Thyroid gland (tissue), 4 donors: ENCODE measurements at regions of chr3 and their contacts with region 1.

Region 1: GRCh38 chr3:63193629-63194028 is 84.5 kb upstream of the SYNPR start:
- DNase-seq: peak in 1 of 2 donors; percentile 3
- H3K4me3 ChIP-seq: no peak overlapping the region
- H3K27ac ChIP-seq: no peak overlapping the region
- H3K4me1 ChIP-seq: no peaks in the 10 kb centered on the region
- H3K27me3 ChIP-seq: no peaks in the 10 kb centered on the region
- CTCF ChIP-seq: peak in 5 of 6 experiments; percentile 21 to 80 (median 60)
- POLR2A ChIP-seq: no peak

Region 2: DNA sequence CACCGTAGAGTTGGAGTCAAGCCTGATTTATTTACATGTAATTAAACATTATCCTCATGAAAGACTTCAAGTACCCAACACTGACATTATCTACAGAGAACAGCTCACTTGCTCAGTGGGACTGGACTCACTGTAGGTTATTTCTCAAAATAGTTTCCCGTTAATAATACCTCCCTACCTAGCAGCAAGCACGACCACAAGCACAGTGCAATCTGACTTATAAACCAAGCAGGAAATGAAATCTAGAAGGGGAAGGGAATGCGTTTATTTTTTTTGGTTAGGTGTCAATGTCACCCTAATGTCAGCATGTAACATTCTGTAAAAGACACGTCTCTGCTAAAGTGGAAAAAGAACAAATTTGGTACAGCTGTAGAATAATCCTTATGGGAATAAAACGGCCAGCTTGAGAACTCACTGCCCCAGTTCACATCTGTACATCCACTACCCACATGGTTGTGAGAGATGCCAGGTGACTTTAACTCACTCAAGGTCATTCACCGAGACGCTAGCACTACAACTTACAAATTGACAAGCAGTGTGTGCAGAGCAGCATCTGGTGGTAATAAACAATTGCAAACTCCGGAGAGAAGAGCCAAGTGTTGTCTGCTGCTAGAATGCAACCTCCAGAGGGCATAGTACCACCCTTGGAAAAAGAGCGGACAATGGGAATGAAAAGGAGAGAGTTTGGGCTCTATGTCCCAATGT is 561.0 kb before region 1 on chr3:
- intact Hi-C with region 1: loop called (anchors 10 kb)
- DNase-seq: no peak
- H3K4me3 ChIP-seq: no peak overlapping the region
- H3K27ac ChIP-seq: no peak overlapping the region
- H3K4me1 ChIP-seq: no peaks in the 10 kb centered on the region
- H3K27me3 ChIP-seq: no peaks in the 10 kb centered on the region
- CTCF ChIP-seq: no peak
- POLR2A ChIP-seq: no peak

Region 3: DNA sequence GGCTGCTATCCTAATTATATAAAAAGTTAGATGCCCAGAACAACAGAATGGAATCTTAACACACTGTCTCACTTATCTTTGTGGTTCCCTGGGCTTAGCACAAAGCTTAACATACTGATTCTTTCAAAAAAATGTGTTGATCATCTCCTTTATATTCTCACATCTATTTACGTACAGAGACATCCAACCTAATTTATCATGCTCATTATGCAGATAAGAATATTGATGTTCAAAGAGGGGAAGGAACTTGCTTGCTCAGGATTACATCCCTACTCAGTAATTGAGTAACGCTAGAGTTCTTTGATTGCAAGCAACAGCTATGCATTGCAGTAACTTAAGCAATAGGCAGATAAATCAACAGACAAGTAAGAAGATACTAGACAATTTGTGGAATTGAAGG is 89.8 kb before region 1 on chr3:
- intact Hi-C with region 1: no loop called
- DNase-seq: no peak
- H3K4me3 ChIP-seq: no peak overlapping the region
- H3K27ac ChIP-seq: no peak overlapping the region
- H3K4me1 ChIP-seq: no peaks in the 10 kb centered on the region
- H3K27me3 ChIP-seq: no peaks in the 10 kb centered on the region
- CTCF ChIP-seq: no peak
- POLR2A ChIP-seq: no peak

Region 4: DNA sequence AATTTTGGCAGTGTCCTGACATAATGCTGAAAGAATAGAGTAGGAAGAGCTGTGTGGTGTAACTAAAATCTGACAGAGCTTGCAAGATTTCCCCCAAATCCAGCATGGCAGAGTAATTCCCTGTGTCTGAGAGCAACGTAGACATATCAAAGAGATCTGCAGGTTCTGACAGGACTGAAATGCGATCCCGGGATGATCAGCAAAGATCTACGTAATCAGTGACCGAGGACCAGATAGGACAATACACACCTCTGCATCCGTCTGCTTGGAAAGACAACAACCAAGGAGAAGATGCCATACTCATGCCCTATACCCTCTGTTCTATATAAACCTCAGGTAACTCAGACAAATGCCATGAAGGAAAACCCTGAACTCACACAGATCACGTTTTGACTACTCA is 57.9 kb after region 1 on chr3:
- intact Hi-C with region 1: no loop called
- DNase-seq: no peak
- H3K4me3 ChIP-seq: no peak overlapping the region
- H3K27ac ChIP-seq: no peak overlapping the region
- H3K4me1 ChIP-seq: no peaks in the 10 kb centered on the region
- H3K27me3 ChIP-seq: no peaks in the 10 kb centered on the region
- CTCF ChIP-seq: no peak
- POLR2A ChIP-seq: no peak